B cell (primary cell): ENCODE measurements at regions of chrX and their contacts with region 1.

Region 1: GRCh38 chrX:80876877-80877276 is 67.2 kb upstream of the BRWD3 start:
- DNase-seq: peak; percentile 21
- ATAC-seq: no peak
- H3K4me3 ChIP-seq: no peak overlapping the region
- H3K4me3 Mint-ChIP-seq: no peak overlapping the region
- H3K27ac ChIP-seq: no peak overlapping the region
- H3K27ac Mint-ChIP-seq: no peak overlapping the region
- H3K4me1 ChIP-seq: no peaks in the 10 kb centered on the region
- H3K4me1 Mint-ChIP-seq: no peaks in the 10 kb centered on the region
- H3K27me3 ChIP-seq: no peaks in the 10 kb centered on the region
- H3K27me3 Mint-ChIP-seq: no peaks in the 10 kb centered on the region
- CTCF ChIP-seq: peak; percentile 52

Region 2: DNA sequence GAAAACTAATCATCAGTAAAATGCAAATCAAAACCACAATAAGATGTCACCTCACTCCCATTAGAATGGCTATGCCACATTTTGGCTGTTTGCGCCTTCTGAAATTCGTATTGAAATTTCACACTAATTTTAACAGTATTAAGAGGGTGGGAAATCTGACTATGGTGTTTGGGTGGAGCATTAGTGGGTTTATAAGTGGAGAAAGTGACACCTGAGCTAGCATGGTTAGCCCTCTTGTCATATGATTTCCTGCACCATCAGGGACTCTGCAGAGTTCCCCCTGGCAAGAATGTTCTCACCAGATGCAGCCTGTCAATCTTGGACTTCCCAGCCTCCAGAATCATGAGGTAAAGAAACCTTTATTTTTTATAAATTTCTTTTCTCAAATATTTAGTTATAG is 35.6 kb before region 1 on chrX:
- CTCF ChIA-PET with region 1: no interaction called
- POLR2A ChIA-PET with region 1: no interaction called
- intact Hi-C with region 1: no loop called
- DNase-seq: no peak
- ATAC-seq: no peak
- H3K4me3 ChIP-seq: no peak overlapping the region
- H3K4me3 Mint-ChIP-seq: no peak overlapping the region
- H3K27ac ChIP-seq: no peak overlapping the region
- H3K27ac Mint-ChIP-seq: no peak overlapping the region
- H3K4me1 ChIP-seq: no peaks in the 10 kb centered on the region
- H3K4me1 Mint-ChIP-seq: no peaks in the 10 kb centered on the region
- H3K27me3 ChIP-seq: no peaks in the 10 kb centered on the region
- H3K27me3 Mint-ChIP-seq: no peaks in the 10 kb centered on the region
- CTCF ChIP-seq: no peak

Region 3: DNA sequence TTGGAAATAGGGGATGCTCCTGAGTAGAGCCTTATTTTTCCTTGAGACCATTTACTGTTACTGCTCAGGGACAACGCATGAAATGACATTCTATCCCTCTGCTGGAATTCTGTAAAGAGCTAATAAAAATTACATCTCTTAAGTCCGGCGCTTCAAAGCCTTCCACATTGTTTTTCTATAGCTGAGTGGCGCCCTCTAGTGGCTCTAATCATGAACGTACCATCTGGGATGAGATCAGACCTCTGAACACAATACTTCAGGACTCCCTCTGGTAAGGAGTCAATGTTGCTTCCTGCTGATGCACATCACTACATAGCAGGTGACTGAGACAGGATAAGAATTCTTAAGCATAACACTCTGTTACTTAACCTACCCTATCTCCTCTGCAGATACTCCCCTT is 318.8 kb after region 1 on chrX:
- CTCF ChIA-PET with region 1: interaction called, 4 read pairs
- POLR2A ChIA-PET with region 1: no interaction called
- intact Hi-C with region 1: loop called (anchors 10 kb)
- DNase-seq: peak; percentile 67
- ATAC-seq: peak; percentile 53
- H3K4me3 ChIP-seq: no peak overlapping the region
- H3K4me3 Mint-ChIP-seq: no peak overlapping the region
- H3K27ac ChIP-seq: no peak overlapping the region
- H3K27ac Mint-ChIP-seq: peak overlapping the region; percentile 51
- H3K4me1 ChIP-seq: no peaks in the 10 kb centered on the region
- H3K4me1 Mint-ChIP-seq: peaks cover 17% of the 10 kb centered on the region
- H3K27me3 ChIP-seq: no peaks in the 10 kb centered on the region
- H3K27me3 Mint-ChIP-seq: no peaks in the 10 kb centered on the region
- CTCF ChIP-seq: peak; percentile 70

Region 4: GRCh38 chrX:81377329-81377728 is 500.5 kb after region 1 on chrX:
- CTCF ChIA-PET with region 1: interaction called, 11 read pairs
- POLR2A ChIA-PET with region 1: no interaction called
- intact Hi-C with region 1: no loop called
- DNase-seq: peak; percentile 14
- ATAC-seq: no peak
- H3K4me3 ChIP-seq: no peak overlapping the region
- H3K4me3 Mint-ChIP-seq: no peak overlapping the region
- H3K27ac ChIP-seq: no peak overlapping the region
- H3K27ac Mint-ChIP-seq: no peak overlapping the region
- H3K4me1 ChIP-seq: no peaks in the 10 kb centered on the region
- H3K4me1 Mint-ChIP-seq: no peaks in the 10 kb centered on the region
- H3K27me3 ChIP-seq: no peaks in the 10 kb centered on the region
- H3K27me3 Mint-ChIP-seq: peaks cover 4% of the 10 kb centered on the region
- CTCF ChIP-seq: peak; percentile 66